ENCODE measurements at regions of chr9 and their contacts with region 1.

Region 1: DNA sequence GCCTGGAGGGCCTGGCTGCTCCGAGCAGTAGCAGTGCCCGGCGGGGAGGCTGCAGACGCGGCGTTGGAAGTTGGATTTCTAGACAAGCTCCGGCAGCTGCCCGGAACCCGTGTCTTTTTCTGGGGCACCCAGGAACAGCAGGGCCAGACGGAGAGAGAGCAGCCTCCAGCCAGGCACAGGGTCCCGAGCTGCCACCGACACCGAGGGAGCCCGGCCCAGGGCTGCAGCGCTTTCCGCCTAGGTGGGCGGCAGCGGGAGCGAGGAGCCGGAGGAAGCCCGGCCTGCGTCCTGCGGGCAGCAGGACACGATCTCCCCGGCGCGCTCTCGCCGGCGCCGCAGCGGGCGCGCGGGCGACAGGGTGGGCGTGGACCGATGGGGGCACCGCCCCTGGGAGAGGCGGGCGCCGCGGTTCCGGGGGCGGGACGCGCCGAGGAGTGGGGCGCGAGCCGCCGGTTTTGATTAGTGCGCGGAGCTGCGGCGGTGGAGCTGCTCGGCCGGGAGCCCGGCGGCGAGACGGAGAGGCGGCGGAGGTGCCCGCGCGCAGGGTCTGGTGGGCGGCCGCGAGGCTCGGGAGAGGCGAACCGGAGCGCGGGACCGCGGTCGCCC is at the start of gene UGCG:
- DNase-seq: peak; percentile 92
- H3K4me3 ChIP-seq: peak within 1 kb of the TSS; percentile 81 to 96 (median 90)
- H3K27ac ChIP-seq: peak within 1 kb of the TSS; percentile 82
- H3K4me1 ChIP-seq: peaks cover 23% of the 10 kb centered on the region
- H3K27me3 ChIP-seq: no peaks in the 10 kb centered on the region
- CTCF ChIP-seq: no peak
- POLR2A ChIP-seq: peak; percentile 95
- total RNA-seq, gene UGCG: 29.9 and 38.5 TPM in 2 replicates

Region 2: DNA sequence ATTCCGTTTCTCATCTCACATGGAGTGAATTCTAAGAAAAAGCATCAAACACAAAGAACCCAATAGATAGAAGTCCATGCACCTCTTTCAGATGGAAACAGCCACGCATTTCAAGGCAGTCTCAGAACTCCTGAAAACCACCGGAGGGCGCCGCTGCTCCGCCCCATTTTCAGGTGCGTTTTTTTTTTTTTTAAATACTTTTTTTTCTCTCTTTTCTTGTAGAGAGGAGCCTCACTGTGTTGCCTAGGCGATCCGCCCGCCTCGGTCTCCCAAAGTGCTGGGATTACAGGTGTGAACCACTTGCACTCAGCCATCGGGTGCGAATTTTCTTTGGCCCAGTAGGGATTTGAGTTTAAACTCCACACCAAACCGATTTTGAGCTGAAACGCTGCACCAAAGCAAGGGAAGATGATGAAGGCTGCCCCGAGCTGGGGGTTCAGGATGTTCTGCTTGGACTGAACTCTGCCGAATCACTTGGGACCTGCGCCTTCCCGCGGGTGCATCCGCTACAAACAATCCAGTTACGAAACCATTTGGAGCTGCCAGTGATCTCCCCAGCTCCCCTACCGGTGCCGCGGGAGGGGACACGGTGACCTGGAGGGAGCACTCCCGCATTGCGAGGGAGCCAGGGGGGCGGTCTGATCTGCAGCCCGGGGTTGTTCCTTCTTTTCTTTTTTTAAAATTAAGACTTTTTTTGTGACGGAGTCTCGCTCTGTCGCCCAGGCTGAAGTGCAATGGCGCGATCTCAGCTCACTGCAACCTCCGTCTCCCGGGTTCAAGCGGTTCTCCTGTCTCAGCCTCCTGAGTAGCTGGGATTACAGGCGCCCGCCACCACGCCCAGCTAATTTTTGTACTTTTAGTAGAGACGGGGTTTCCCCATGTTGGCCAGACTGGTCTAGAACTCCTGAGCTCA is 298.4 kb before region 1 on chr9:
- CTCF ChIA-PET with region 1: no interaction called
- POLR2A ChIA-PET with region 1: no interaction called
- dilution Hi-C with region 1: no loop called
- intact Hi-C with region 1: loop called (anchors 1 kb)
- DNase-seq: peak; percentile 81
- H3K4me3 ChIP-seq: peak overlapping the region; percentile 72 to 91 (median 90)
- H3K27ac ChIP-seq: peak overlapping the region; percentile 87
- H3K4me1 ChIP-seq: peaks cover 36% of the 10 kb centered on the region
- H3K27me3 ChIP-seq: no peaks in the 10 kb centered on the region
- CTCF ChIP-seq: peak; percentile 68 to 72
- POLR2A ChIP-seq: no peak

Region 3: GRCh38 chr9:111752455-111752854 is 144.0 kb before region 1 on chr9:
- CTCF ChIA-PET with region 1: no interaction called
- POLR2A ChIA-PET with region 1: no interaction called
- dilution Hi-C with region 1: no loop called
- intact Hi-C with region 1: no loop called
- DNase-seq: no peak
- H3K4me3 ChIP-seq: no peak overlapping the region
- H3K27ac ChIP-seq: no peak overlapping the region
- H3K4me1 ChIP-seq: no peaks in the 10 kb centered on the region
- H3K27me3 ChIP-seq: no peaks in the 10 kb centered on the region
- CTCF ChIP-seq: no peak
- POLR2A ChIP-seq: no peak

Region 4: DNA sequence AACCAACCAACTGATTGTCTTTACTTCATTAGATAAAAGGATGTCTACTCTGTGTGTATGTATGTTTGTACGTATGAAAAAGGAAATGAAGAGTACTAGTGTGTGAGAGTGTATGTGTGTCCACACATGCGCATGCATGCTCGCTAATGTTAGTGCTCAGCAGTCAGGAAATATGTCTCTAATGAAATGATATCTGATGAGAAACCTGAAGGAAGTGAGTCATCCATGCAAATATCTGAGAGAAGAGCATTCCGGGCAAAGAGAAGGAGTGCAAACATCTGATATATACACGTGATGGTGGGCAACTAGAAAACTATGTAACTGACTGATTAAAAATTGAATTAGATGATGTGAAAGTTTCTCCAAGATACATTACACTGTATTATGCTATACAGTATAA is 29.5 kb before region 1 on chr9:
- CTCF ChIA-PET with region 1: interaction called, 4 read pairs
- POLR2A ChIA-PET with region 1: no interaction called
- dilution Hi-C with region 1: no loop called
- intact Hi-C with region 1: loop called (anchors 2 kb)
- DNase-seq: peak; percentile 59
- H3K4me3 ChIP-seq: no peak overlapping the region
- H3K27ac ChIP-seq: no peak overlapping the region
- H3K4me1 ChIP-seq: peaks cover 12% of the 10 kb centered on the region
- H3K27me3 ChIP-seq: no peaks in the 10 kb centered on the region
- CTCF ChIP-seq: no peak
- POLR2A ChIP-seq: no peak

Region 5: GRCh38 chr9:111957856-111958652 is 61.6 kb after region 1 on chr9:
- CTCF ChIA-PET with region 1: interaction called, 3 read pairs
- POLR2A ChIA-PET with region 1: interaction called, 6 read pairs
- dilution Hi-C with region 1: no loop called
- intact Hi-C with region 1: loop called (anchors 1 kb)
- DNase-seq: peak; percentile 96
- H3K4me3 ChIP-seq: peak overlapping the region in 1 of 3 experiments; percentile 6
- H3K27ac ChIP-seq: peak overlapping the region; percentile 89
- H3K4me1 ChIP-seq: peaks cover 43% of the 10 kb centered on the region
- H3K27me3 ChIP-seq: no peaks in the 10 kb centered on the region
- CTCF ChIP-seq: no peak
- POLR2A ChIP-seq: peak; percentile 79

Region 6: DNA sequence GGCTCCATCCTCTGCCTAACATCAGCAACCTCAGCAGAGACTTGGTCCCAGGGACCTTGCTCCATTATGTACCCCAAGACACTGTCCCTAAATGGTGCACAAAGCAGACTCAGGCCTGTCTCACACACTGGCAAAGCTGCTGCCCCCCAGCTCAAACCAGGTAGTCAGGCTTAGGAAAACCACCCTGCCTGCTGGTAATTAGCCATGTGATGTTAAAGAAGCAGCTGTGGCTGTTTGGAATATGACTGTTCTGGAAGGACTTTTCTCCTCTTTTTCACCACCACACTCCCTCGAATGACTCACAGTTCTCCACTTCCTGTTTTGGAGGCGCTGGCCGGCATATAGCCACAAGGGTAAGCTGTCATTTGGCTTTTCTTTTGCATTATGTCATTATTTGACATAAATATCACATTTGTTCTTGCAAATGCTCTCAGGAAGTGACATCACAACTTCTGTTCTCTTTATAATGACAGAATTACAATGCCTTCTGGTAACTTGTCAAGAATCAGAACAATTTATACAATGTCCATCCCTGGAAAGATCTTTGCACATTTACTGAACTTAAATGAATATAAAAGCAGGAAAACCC is 164.8 kb after region 1 on chr9:
- CTCF ChIA-PET with region 1: no interaction called
- POLR2A ChIA-PET with region 1: interaction called, 3 read pairs
- dilution Hi-C with region 1: no loop called
- intact Hi-C with region 1: loop called (anchors 1 kb)
- DNase-seq: peak; percentile 98
- H3K4me3 ChIP-seq: no peak overlapping the region
- H3K27ac ChIP-seq: peak overlapping the region; percentile 97
- H3K4me1 ChIP-seq: peaks cover 35% of the 10 kb centered on the region
- H3K27me3 ChIP-seq: no peaks in the 10 kb centered on the region
- CTCF ChIP-seq: no peak
- POLR2A ChIP-seq: peak; percentile 27